ENCODE measurements at regions of chr10 and their contacts with region 1.

Region 1: DNA sequence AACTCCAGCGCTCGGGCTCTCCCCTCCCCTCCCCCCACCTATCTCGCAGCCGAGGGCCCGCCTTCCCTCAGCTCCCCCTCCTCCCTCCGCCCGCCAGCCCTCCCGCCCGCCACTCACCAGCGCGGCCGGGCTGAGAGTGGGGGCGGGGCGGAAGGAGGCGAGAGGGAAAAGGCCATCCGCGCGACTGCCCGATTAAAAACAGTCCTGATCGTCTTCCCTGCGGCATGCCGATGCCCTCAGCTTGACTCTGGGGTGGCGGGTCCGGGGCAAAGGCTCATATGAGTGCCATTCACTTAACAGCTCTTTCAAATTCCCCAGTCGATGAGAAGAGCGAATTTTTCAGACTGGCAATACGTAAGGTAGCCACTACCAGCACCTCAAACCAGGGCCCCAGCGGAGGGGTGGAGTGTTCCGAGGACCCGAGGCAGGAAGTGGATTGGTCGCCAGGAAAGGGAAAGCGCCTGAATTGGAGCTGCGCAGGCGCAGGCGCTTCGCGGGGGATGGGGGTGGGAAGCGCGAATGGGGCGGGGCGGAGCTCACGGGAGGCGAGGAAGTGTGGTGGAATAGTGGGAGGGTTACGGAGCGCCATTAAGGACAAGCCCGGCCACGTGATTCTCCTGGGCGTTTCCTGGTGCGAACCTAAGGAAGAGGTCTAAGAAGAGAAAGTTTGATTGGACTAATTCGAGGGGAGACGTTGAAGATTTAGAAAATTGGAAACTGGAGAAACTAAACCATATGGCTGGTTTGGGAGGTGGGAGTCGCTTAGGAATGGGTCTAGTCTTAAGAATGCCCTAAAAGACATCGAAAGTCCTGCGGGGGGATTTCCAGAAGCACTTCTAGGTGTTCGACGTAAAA is at the start of gene UPF2:
- DNase-seq: peak; percentile 98
- ATAC-seq: peak; percentile 73
- H3K4me3 ChIP-seq: peak within 1 kb of the TSS; percentile 71 to 99 (median 90)
- H3K4me3 Mint-ChIP-seq: peak within 1 kb of the TSS; percentile 99
- H3K27ac ChIP-seq: peak within 1 kb of the TSS; percentile 95 to 100
- H3K27ac Mint-ChIP-seq: peak within 1 kb of the TSS; percentile 100
- H3K4me1 ChIP-seq: peaks cover 13 to 29% of the 10 kb centered on the region in 2 donors
- H3K4me1 Mint-ChIP-seq: peaks cover 45% of the 10 kb centered on the region
- H3K27me3 ChIP-seq: no peaks in the 10 kb centered on the region
- H3K27me3 Mint-ChIP-seq: no peaks in the 10 kb centered on the region
- CTCF ChIP-seq: no peak
- total RNA-seq, gene UPF2: 60.0 and 63.7 TPM in 2 replicates

Region 2: GRCh38 chr10:11986593-11987216 is 56.3 kb before region 1 on chr10:
- CTCF ChIA-PET with region 1: interaction called, 3 read pairs
- POLR2A ChIA-PET with region 1: no interaction called
- intact Hi-C with region 1: loop called (anchors 2 kb)
- DNase-seq: peak; percentile 79
- ATAC-seq: peak; percentile 53
- H3K4me3 ChIP-seq: no peak overlapping the region
- H3K4me3 Mint-ChIP-seq: no peak overlapping the region
- H3K27ac ChIP-seq: peak overlapping the region in 1 of 2 donors; percentile 4
- H3K27ac Mint-ChIP-seq: no peak overlapping the region
- H3K4me1 ChIP-seq: peaks cover 6 to 11% of the 10 kb centered on the region in 2 donors
- H3K4me1 Mint-ChIP-seq: peaks cover 23% of the 10 kb centered on the region
- H3K27me3 ChIP-seq: no peaks in the 10 kb centered on the region
- H3K27me3 Mint-ChIP-seq: no peaks in the 10 kb centered on the region
- CTCF ChIP-seq: peak; percentile 96

Region 3: DNA sequence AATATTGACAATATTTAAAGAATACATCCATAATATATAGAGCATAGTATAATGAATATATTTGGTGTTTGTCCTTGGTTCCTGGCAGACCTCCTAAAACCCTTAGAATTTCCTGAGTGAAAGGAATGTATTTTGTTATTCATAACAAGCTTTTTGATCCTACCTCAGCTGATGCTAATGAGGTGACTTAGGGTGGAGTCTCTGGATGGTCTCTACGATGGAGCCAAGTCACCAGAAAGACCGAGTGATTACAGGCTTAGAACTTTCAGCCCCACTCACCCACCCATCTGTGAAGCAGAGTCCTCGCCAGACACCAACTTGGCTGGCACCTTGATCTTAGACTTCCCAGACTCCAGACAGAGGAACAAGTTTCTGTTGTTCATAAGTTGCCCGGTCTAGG is 36.4 kb before region 1 on chr10:
- CTCF ChIA-PET with region 1: no interaction called
- POLR2A ChIA-PET with region 1: interaction called, 3 read pairs
- intact Hi-C with region 1: loop called (anchors 5 kb)
- DNase-seq: no peak
- ATAC-seq: no peak
- H3K4me3 ChIP-seq: no peak overlapping the region
- H3K4me3 Mint-ChIP-seq: no peak overlapping the region
- H3K27ac ChIP-seq: no peak overlapping the region
- H3K27ac Mint-ChIP-seq: no peak overlapping the region
- H3K4me1 ChIP-seq: no peaks in the 10 kb centered on the region
- H3K4me1 Mint-ChIP-seq: no peaks in the 10 kb centered on the region
- H3K27me3 ChIP-seq: no peaks in the 10 kb centered on the region
- H3K27me3 Mint-ChIP-seq: no peaks in the 10 kb centered on the region
- CTCF ChIP-seq: no peak

Region 4: GRCh38 chr10:12068449-12069269 is 25.6 kb after region 1 on chr10 and contains the start of gene DHTKD1:
- CTCF ChIA-PET with region 1: interaction called, 11 read pairs
- POLR2A ChIA-PET with region 1: interaction called, 32 read pairs
- intact Hi-C with region 1: loop called (anchors 1 kb)
- DNase-seq: peak; percentile 98
- ATAC-seq: peak; percentile 98
- H3K4me3 ChIP-seq: peak within 1 kb of the TSS; percentile 92 to 98 (median 96)
- H3K4me3 Mint-ChIP-seq: peak within 1 kb of the TSS; percentile 88
- H3K27ac ChIP-seq: peak within 1 kb of the TSS; percentile 80 to 91
- H3K27ac Mint-ChIP-seq: peak within 1 kb of the TSS; percentile 95
- H3K4me1 ChIP-seq: peaks cover 27 to 33% of the 10 kb centered on the region in 2 donors
- H3K4me1 Mint-ChIP-seq: peaks cover 41% of the 10 kb centered on the region
- H3K27me3 ChIP-seq: no peaks in the 10 kb centered on the region
- H3K27me3 Mint-ChIP-seq: no peaks in the 10 kb centered on the region
- CTCF ChIP-seq: peak; percentile 44
- total RNA-seq, gene DHTKD1: 72.3 and 77.0 TPM in 2 replicates

Region 5: GRCh38 chr10:12077580-12078180 is 34.7 kb after region 1 on chr10:
- CTCF ChIA-PET with region 1: interaction called, 9 read pairs
- POLR2A ChIA-PET with region 1: interaction called, 25 read pairs
- intact Hi-C with region 1: loop called (anchors 1 kb)
- DNase-seq: peak; percentile 81
- ATAC-seq: peak; percentile 73
- H3K4me3 ChIP-seq: no peak overlapping the region
- H3K4me3 Mint-ChIP-seq: peak overlapping the region; percentile 72
- H3K27ac ChIP-seq: peak overlapping the region; percentile 90
- H3K27ac Mint-ChIP-seq: peak overlapping the region; percentile 97
- H3K4me1 ChIP-seq: peaks cover 46 to 64% of the 10 kb centered on the region in 2 donors
- H3K4me1 Mint-ChIP-seq: peaks cover 54% of the 10 kb centered on the region
- H3K27me3 ChIP-seq: no peaks in the 10 kb centered on the region
- H3K27me3 Mint-ChIP-seq: no peaks in the 10 kb centered on the region
- CTCF ChIP-seq: no peak

Region 6: DNA sequence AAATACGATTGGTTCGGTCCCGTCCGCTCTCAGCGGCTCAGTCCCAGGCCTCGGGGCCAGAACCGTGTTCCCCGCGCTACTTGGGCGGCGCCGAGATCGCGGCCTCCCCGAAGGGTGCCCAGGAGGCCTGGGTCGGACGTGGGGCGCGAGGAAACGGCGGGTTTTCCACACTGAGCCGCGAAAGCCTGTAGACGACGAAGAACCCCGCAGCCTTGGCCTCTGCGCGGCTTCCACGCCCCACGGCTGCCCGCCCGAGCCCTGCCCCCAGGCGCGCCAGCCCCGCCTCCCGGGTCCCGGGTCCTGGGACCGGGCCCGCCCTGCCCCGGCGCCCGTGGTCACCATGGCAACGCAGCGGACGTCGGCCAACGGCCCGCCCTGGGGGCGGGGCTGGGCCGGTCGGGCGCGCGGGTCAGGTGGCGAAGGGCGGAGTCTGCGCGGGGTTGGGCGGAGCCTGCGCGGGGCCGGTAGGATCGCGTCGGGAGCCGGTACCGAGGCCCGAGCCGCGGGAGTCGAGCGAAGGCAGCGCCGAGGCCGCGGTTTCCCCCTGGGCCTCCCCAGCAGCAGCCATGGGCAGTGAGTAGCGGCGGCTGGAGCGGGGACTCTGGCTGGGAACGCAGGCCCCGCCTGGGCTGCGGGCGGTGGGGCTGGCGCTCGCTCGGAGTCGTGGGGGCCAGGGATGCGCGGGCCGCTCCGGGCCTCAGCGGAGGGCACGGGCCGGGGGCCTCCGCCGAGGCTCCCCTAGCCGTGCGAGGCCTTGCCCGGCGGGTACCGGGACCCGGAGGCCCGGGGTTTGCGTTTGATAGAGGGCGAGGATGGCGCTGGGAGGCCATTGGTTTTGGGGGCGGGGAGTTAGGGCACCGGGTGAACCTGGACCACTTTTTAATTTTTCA is 86.4 kb after region 1 on chr10 and contains the start of gene SEC61A2:
- CTCF ChIA-PET with region 1: interaction called, 3 read pairs
- POLR2A ChIA-PET with region 1: interaction called, 3 read pairs
- intact Hi-C with region 1: loop called (anchors 1 kb)
- DNase-seq: peak; percentile 98
- ATAC-seq: peak; percentile 89
- H3K4me3 ChIP-seq: peak within 1 kb of the TSS; percentile 74 to 91 (median 85)
- H3K4me3 Mint-ChIP-seq: peak within 1 kb of the TSS; percentile 95
- H3K27ac ChIP-seq: peak within 1 kb of the TSS; percentile 92
- H3K27ac Mint-ChIP-seq: peak within 1 kb of the TSS; percentile 91
- H3K4me1 ChIP-seq: peaks cover 9 to 16% of the 10 kb centered on the region in 2 donors
- H3K4me1 Mint-ChIP-seq: peaks cover 15% of the 10 kb centered on the region
- H3K27me3 ChIP-seq: no peaks in the 10 kb centered on the region
- H3K27me3 Mint-ChIP-seq: no peaks in the 10 kb centered on the region
- CTCF ChIP-seq: no peak
- total RNA-seq, gene SEC61A2: 20.2 and 22.8 TPM in 2 replicates

Region 7: GRCh38 chr10:12195603-12196506 is 152.8 kb after region 1 on chr10 and contains the starts of genes CDC123 and NUDT5:
- CTCF ChIA-PET with region 1: interaction called, 4 read pairs
- POLR2A ChIA-PET with region 1: interaction called, 5 read pairs
- intact Hi-C with region 1: loop called (anchors 1 kb)
- DNase-seq: peak; percentile 93
- ATAC-seq: peak; percentile 90
- H3K4me3 ChIP-seq: peak within 1 kb of the TSS; percentile 87 to 97 (median 95)
- H3K4me3 Mint-ChIP-seq: peak within 1 kb of the TSS; percentile 93
- H3K27ac ChIP-seq: peak within 1 kb of the TSS; percentile 91 to 94
- H3K27ac Mint-ChIP-seq: peak within 1 kb of the TSS; percentile 99
- H3K4me1 ChIP-seq: peaks cover 18 to 24% of the 10 kb centered on the region in 2 donors
- H3K4me1 Mint-ChIP-seq: peaks cover 42% of the 10 kb centered on the region
- H3K27me3 ChIP-seq: no peaks in the 10 kb centered on the region
- H3K27me3 Mint-ChIP-seq: no peaks in the 10 kb centered on the region
- CTCF ChIP-seq: no peak
- total RNA-seq, gene CDC123: 56.0 and 62.0 TPM in 2 replicates
- total RNA-seq, gene NUDT5: 39.1 and 39.9 TPM in 2 replicates

Region 8: GRCh38 chr10:12945690-12946359 is 902.8 kb after region 1 on chr10:
- CTCF ChIA-PET with region 1: no interaction called
- POLR2A ChIA-PET with region 1: no interaction called
- intact Hi-C with region 1: no loop called
- DNase-seq: no peak
- ATAC-seq: no peak
- H3K4me3 ChIP-seq: no peak overlapping the region
- H3K4me3 Mint-ChIP-seq: no peak overlapping the region
- H3K27ac ChIP-seq: no peak overlapping the region
- H3K27ac Mint-ChIP-seq: no peak overlapping the region
- H3K4me1 ChIP-seq: no peaks in the 10 kb centered on the region
- H3K4me1 Mint-ChIP-seq: no peaks in the 10 kb centered on the region
- H3K27me3 ChIP-seq: no peaks in the 10 kb centered on the region
- H3K27me3 Mint-ChIP-seq: no peaks in the 10 kb centered on the region
- CTCF ChIP-seq: no peak